ENCODE measurements at regions of chr17 and their contacts with region 1.

Region 1: DNA sequence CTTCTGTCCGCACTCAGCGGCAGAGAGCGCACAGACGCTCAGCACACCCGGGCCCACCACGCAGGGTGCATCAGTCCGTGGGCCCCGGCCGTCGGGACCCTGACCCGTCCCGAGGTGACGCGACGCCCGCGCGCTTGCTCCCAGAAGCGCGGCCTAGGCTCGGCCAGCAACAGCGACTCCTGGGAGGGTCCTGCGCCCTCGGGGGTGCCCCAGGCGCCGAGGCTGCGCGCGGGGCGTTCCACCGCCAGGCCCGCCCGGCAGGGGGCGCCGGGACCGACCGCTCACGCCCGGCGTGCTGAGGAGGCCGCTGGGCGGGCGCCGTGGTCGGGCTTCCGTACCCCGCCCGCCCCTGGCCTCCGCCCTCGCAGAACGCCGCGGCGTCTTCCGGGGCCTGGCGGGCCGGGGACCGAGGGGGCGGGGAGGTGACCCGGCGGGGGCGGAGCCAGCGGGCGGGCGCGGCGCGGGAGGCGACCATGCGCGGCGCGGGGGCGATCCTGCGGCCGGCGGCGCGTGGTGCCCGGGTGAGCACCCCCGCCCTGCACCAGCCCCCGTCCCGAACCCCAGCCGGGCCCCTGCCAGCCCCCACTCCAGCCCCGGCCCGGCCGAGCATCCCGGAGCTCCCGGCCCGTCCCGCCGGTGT is at the start of gene CISD3:
- DNase-seq: peak; percentile 84 to 91
- ATAC-seq: peak; percentile 75 to 95 (median 84)
- H3K4me3 ChIP-seq: peak within 1 kb of the TSS; percentile 51 to 88 (median 73)
- H3K27ac ChIP-seq: peak within 1 kb of the TSS; percentile 65 to 97 (median 93)
- H3K4me1 ChIP-seq: peaks cover 11 to 65% (median 45%) of the 10 kb centered on the region in 9 donors
- H3K27me3 ChIP-seq: no peaks in the 10 kb centered on the region
- CTCF ChIP-seq: peak; percentile 52 to 92 (median 76)
- total RNA-seq, gene CISD3: 58.1 to 84.1 (median 69.4) TPM

Region 2: GRCh38 chr17:38557836-38558727 is 171.9 kb before region 1 on chr17:
- intact Hi-C with region 1: loop called in 1 of 10 experiments (anchors 10 kb)
- DNase-seq: peak; percentile 89 to 93
- ATAC-seq: peak; percentile 87 to 96 (median 94)
- H3K4me3 ChIP-seq: peak overlapping the region; percentile 0 to 57 (median 42)
- H3K27ac ChIP-seq: no peak overlapping the region
- H3K4me1 ChIP-seq: peaks cover 20 to 39% (median 33%) of the 10 kb centered on the region in 9 donors
- H3K27me3 ChIP-seq: peaks cover 30 to 64% (median 47%) of the 10 kb centered on the region in 7 donors
- CTCF ChIP-seq: peak; percentile 84 to 98 (median 90)

Region 3: DNA sequence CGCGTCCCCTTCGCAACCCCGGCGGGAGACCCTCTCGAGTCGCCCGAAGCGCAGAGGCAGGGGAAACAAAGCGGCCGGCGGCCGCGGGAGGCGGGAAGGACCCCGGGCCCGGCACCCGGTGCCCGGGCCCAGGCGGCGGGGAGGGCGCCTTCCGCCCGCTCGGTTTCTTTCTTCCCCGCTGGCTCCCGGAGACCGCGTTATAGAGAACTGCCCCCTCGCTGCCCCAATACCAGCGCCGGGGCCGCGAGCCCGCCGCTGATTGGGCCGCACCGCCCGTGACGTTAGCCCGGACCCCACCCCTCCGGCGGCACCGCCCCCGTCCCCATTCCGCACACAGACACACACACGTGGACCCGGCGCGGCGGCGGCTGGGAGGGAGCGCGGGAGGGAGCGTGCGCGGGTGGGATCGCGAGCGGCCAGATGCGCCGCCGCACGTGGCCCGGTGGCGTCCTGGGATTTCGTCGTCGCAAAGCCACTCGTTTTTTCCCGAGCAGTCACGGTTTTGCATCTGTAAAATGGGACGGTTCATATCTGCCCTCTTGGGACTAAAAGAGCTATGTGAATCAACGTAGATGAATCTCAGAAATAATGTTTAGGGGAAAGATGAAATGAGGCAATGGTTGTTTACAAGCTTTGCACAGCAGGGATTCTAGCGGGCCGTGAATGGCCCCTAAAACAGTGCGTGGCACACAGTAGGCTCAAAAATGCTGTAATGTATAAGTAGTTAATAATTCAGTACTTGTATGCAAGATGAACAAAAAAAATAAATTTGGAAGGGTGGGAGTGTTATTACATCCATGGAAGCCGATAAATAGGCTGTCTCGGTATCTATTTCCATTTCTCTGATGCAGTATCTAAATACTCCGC is 55.0 kb before region 1 on chr17 and contains the start of gene EPOP:
- intact Hi-C with region 1: loop called (anchors 1 to 5 kb)
- DNase-seq: peak; percentile 87 to 88
- ATAC-seq: peak; percentile 85 to 92 (median 90)
- H3K4me3 ChIP-seq: peak within 1 kb of the TSS; percentile 41 to 66 (median 59)
- H3K27ac ChIP-seq: peak within 1 kb of the TSS in 2 of 10 donors; percentile 28 to 56
- H3K4me1 ChIP-seq: peaks cover 8 to 37% (median 30%) of the 10 kb centered on the region in 9 donors
- H3K27me3 ChIP-seq: peaks cover 19 to 63% (median 58%) of the 10 kb centered on the region in 7 donors
- CTCF ChIP-seq: peak in 2 of 9 donors; percentile 4
- total RNA-seq, gene EPOP: 0.25 to 1.3 (median 0.64) TPM

Region 4: DNA sequence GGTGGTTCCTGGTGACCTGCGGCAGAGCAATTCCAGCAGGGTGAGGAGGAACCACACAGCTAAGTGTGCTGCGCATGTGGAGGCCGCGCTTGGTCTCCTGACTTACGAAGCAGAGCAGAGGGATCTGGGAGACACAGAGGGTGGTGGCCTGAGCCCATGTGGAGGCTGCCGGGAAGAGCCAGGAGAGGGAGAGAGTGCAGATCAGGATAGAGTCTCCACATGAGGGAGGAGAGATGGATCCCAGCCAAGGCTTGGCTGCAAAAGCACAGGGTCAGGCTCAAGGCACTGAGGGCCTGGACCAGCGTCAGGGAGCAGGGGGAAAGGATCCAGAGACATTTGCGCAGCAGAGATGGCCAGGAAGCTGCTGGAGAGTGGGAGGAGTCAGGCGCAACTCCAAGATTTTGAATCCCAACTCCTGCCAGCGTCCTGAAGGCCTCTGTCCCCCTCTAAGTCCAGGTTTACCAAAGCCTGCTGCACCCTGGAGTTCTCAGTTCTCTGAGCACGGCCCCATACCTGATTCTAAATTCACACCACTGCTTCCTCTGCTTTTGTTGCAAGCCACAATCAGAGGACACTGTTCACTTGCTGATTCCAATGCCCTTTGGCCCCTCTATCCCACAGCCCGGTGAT is 36.2 kb before region 1 on chr17:
- intact Hi-C with region 1: loop called in 3 of 10 experiments (anchors 5 kb)
- DNase-seq: peak; percentile 91 to 96
- ATAC-seq: peak; percentile 95 to 98 (median 98)
- H3K4me3 ChIP-seq: peak overlapping the region in 1 of 10 donors; percentile 3
- H3K27ac ChIP-seq: peak overlapping the region; percentile 7 to 86 (median 83)
- H3K4me1 ChIP-seq: peaks cover 8 to 20% (median 17%) of the 10 kb centered on the region in 9 donors
- H3K27me3 ChIP-seq: no peaks in the 10 kb centered on the region
- CTCF ChIP-seq: peak in 1 of 9 donors; percentile 16

Region 5: DNA sequence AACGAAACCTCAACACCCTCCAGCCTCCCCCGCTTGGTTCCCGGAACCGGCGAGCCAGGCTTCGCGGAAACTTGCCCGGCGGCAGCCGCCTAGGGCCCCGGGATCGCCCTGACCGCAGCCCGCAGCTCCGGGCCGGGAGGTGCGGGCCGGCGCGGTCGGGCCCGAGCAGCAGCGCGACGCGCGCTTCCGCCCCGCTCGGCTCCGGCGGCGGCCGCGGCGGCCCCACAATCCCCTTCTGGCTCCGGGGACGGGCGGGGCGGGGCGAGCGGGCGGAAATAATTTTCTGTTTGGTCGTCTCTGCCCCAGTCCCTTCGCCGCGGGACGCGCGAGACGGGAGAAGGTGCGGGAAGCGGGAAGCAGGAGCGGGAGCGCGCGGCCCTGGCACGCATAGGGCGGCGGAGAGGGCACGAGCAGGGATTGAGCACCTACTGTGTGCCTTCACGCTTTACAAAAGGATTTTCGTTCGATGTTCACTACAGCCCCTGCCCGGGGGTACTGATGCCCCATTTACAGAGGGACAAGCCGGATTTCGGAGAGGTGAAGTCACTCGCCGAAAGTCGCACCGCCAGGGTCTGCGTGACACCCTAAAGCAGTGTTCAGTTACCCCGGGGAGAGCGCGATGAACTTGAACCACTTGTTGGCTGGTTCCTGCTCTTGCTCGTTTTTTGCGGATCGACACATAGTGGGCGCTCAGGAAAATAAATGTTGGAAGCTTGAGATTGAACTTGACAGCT is 27.7 kb before region 1 on chr17:
- intact Hi-C with region 1: loop called in 3 of 10 experiments (anchors 2 to 5 kb)
- DNase-seq: peak; percentile 90 to 91
- ATAC-seq: peak; percentile 66 to 78 (median 72)
- H3K4me3 ChIP-seq: peak overlapping the region; percentile 60 to 96 (median 90)
- H3K27ac ChIP-seq: peak overlapping the region; percentile 72 to 100 (median 98)
- H3K4me1 ChIP-seq: peaks cover 8 to 66% (median 31%) of the 10 kb centered on the region in 9 donors
- H3K27me3 ChIP-seq: no peaks in the 10 kb centered on the region
- CTCF ChIP-seq: no peak

Region 6: DNA sequence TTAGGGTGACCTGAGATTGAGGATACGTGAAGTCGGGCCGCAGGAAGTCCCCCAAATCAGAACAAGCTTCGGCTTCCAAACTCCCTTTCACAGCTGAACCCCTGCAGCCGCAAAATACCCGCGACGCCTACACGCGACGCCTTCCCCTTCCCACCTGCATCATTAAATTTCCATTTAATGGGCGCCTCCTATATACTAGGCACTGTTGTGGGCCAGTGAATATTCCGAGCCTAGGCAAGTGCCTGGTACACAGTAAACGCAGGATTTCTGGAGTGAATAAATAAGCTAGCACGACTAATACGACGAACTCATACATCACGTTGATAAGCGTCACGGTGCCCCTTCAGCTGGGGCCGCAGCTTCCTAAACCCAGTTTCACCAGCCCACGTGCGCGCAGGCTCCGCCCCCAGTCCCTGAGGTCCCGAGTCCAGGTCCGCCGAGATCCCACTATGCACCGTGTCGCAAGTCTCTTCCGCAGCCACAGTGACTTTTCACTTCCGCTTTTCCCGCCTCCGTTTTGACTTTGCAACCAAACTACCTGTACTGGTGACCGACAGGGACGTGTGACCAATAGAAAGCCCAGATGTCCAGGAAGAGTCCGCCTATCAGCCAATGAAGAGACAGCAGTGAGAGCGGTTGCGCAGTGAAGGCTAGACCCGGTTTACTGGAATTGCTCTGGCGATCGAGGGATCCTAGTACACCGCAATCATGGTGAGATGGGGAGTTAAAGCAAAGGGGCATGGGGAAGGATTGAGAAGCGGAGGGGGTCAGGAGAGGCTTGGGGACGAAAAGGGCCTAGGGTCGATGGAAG is 22.3 kb after region 1 on chr17 and contains the start of gene PSMB3:
- intact Hi-C with region 1: loop called in 3 of 10 experiments (anchors 1 to 2 kb)
- DNase-seq: peak; percentile 94 to 99
- ATAC-seq: peak; percentile 80 to 90 (median 84)
- H3K4me3 ChIP-seq: peak within 1 kb of the TSS; percentile 69 to 99 (median 88)
- H3K27ac ChIP-seq: peak within 1 kb of the TSS; percentile 42 to 99 (median 96)
- H3K4me1 ChIP-seq: peaks cover 9 to 56% (median 43%) of the 10 kb centered on the region in 9 donors
- H3K27me3 ChIP-seq: peaks cover 0 to 36% (median 0%) of the 10 kb centered on the region in 7 donors
- CTCF ChIP-seq: no peak
- total RNA-seq, gene PSMB3: 148 to 220 (median 162) TPM

Measured in heart right ventricle (tissue), 16 donors.